HEK293 (cell line): ENCODE measurements at regions of chr6 and their contacts with region 1.

Region 1: GRCh38 chr6:87929843-87930288 is 117.8 kb upstream of the SPACA1 start:
- H3K4me3 ChIP-seq: no peak overlapping the region
- H3K27ac ChIP-seq: no peak overlapping the region
- H3K4me1 ChIP-seq: no peaks in the 10 kb centered on the region
- CTCF ChIP-seq: peak; percentile 86

Region 2: GRCh38 chr6:87393022-87393622 is 536.7 kb before region 1 on chr6:
- CTCF ChIA-PET with region 1: interaction called, 12 read pairs
- POLR2A ChIA-PET with region 1: no interaction called
- H3K4me3 ChIP-seq: no peak overlapping the region
- H3K27ac ChIP-seq: no peak overlapping the region
- H3K4me1 ChIP-seq: no peaks in the 10 kb centered on the region
- CTCF ChIP-seq: 0 out of 2 replicates have a peak, but pooled peaks have one; percentile 54

Region 3: GRCh38 chr6:87907521-87907920 is 22.3 kb before region 1 on chr6:
- CTCF ChIA-PET with region 1: interaction called, 14 read pairs
- POLR2A ChIA-PET with region 1: no interaction called
- H3K4me3 ChIP-seq: no peak overlapping the region
- H3K27ac ChIP-seq: no peak overlapping the region
- H3K4me1 ChIP-seq: no peaks in the 10 kb centered on the region; the same call in 1 of the 2 replicates
- CTCF ChIP-seq: no peak

Region 4: GRCh38 chr6:87944541-87944954 is 14.7 kb after region 1 on chr6:
- CTCF ChIA-PET with region 1: interaction called, 16 read pairs
- POLR2A ChIA-PET with region 1: no interaction called
- H3K4me3 ChIP-seq: no peak overlapping the region
- H3K27ac ChIP-seq: no peak overlapping the region
- H3K4me1 ChIP-seq: no peaks in the 10 kb centered on the region
- CTCF ChIP-seq: peak; percentile 65; the same call in 1 of the 2 replicates

Region 5: DNA sequence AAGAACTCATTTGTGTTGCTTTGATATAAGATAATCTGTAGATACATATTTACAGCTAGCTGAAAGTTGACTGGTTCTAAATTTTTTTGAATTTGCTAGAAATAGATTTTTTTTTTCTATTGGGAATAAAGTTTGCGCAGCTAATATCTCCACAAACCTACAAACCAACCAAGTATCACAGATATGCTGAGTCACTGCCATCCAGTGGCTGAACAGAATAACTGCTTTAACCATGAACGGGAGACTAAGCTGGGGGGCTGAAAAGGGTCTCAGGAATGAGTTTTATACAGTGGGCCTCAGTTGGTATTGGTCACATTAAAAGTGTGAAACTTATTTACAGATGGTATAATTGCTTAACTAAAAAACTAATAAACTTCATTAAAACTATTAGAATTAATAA is 563.0 kb after region 1 on chr6:
- CTCF ChIA-PET with region 1: interaction called, 21 read pairs
- POLR2A ChIA-PET with region 1: interaction called, 4 read pairs
- H3K4me3 ChIP-seq: no peak overlapping the region
- H3K27ac ChIP-seq: no peak overlapping the region
- H3K4me1 ChIP-seq: no peaks in the 10 kb centered on the region
- CTCF ChIP-seq: no peak